Activated naive CD4-positive, alpha-beta T cell treated with anti-CD3 and anti-CD28 coated beads for 36 hours (primary cell): ENCODE measurements at regions of chr1 and their contacts with region 1.

Region 1: DNA sequence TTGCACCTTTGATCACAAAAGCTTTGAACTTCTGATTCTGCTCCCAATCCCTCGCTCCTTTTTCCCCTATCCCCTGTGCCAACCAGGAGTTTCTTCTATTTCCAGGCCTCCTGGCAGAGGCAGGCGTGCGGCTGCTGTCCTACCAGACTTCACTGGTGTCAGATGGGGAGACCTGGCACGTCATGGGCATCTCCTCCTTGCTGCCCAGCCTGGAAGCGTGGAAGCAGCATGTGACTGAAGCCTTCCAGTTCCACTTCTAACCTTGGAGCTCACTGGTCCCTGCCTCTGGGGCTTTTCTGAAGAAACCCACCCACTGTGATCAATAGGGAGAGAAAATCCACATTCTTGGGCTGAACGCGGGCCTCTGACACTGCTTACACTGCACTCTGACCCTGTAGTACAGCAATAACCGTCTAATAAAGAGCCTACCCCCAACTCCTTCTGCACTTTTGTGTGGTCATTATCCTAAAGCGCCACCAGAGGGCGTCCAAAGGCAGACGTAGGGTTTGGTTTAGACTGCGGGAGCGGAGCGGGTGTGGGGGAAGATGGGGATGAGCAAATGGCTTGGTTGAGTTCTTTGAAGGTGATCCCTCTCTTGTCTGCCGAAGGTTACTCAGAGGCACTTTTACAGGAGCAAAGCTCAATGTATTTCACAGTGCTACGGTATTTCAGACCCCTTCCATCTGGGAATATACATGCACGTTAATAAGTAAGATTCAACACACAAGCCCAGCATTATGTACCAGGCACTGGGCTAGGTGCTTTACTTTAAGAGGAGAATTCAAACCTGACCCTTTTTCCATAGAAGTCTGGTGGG is 24.7 kb downstream of the HMGCS2 start:
- DNase-seq: peak; percentile 72
- H3K4me3 Mint-ChIP-seq: no peak overlapping the region
- H3K27ac Mint-ChIP-seq: no peak overlapping the region
- H3K4me1 Mint-ChIP-seq: peaks cover 15% of the 10 kb centered on the region
- H3K27me3 Mint-ChIP-seq: no peaks in the 10 kb centered on the region

Region 2: DNA sequence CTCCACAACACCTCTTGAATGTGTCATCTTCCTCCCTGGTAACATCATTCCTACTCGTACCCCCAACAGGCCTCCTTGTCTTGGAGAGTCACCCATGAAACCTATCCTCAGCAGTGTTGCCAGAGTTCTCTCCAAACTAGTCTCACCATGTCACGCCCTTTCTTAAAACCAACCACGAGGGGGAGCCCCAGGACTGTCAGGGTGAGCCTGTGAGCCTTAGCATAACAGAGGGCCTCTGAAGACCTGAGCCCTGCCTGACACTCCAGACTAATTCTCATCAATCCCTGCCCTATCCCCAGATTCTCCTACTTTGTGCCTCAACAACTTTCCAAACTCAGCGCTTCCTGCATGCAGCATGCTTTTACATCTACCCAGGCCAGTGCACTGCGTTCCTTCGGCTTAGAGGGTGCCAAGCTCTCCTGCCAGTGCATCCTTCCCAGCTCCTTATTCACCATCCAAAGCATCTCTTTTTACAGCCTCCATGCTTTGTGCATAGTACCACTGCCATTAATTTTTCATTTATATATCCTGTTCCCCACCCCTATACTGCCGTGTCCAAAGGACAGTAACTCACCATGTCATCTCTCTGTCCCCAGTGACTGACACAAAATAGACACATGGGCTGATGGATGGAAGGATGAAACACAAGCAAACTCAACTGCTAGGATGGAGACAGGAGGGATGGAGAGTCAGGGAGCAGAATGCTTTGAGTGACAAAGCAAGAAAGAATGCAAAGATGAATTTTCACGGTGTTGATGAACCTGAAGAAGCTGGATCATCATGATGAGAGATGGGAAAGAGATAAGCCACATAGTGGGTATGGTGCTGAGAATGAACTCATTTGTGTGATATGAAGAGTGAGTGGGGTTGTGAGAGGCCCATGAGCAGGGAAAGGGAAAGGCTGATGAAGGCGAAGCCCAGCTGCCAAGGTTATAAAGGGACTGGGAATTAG is 129.9 kb before region 1 on chr1:
- CTCF ChIA-PET with region 1: interaction called, 4 read pairs
- intact Hi-C with region 1: loop called (anchors 5 kb)
- DNase-seq: peak; percentile 86
- H3K4me3 Mint-ChIP-seq: no peak overlapping the region
- H3K27ac Mint-ChIP-seq: no peak overlapping the region
- H3K4me1 Mint-ChIP-seq: no peaks in the 10 kb centered on the region
- H3K27me3 Mint-ChIP-seq: no peaks in the 10 kb centered on the region

Region 3: DNA sequence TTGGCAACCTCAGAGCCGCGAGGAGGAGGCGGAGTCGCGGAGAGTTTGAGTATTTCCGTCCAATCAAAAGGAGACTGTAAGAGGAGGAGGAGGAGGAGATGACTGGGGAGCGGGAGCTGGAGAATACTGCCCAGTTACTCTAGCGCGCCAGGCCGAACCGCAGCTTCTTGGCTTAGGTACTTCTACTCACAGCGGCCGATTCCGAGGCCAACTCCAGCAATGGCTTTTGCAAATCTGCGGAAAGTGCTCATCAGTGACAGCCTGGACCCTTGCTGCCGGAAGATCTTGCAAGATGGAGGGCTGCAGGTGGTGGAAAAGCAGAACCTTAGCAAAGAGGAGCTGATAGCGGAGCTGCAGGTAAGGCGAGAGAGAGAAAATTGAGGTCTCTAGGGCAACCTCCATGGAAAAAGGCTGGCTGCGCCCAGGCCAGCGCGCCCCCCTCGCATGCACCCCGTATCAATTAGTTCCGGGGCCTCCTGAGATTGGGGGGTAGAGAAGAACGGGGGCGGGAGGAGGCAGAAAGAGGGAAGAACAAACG is 32.1 kb before region 1 on chr1 and contains the start of gene PHGDH:
- CTCF ChIA-PET with region 1: interaction called, 8 read pairs
- intact Hi-C with region 1: loop called (anchors 2 kb)
- DNase-seq: peak; percentile 85
- H3K4me3 Mint-ChIP-seq: peak within 1 kb of the TSS; percentile 88
- H3K27ac Mint-ChIP-seq: peak within 1 kb of the TSS; percentile 84
- H3K4me1 Mint-ChIP-seq: peaks cover 31% of the 10 kb centered on the region
- H3K27me3 Mint-ChIP-seq: no peaks in the 10 kb centered on the region
- total RNA-seq, gene PHGDH: 422 to 439 TPM

Region 4: DNA sequence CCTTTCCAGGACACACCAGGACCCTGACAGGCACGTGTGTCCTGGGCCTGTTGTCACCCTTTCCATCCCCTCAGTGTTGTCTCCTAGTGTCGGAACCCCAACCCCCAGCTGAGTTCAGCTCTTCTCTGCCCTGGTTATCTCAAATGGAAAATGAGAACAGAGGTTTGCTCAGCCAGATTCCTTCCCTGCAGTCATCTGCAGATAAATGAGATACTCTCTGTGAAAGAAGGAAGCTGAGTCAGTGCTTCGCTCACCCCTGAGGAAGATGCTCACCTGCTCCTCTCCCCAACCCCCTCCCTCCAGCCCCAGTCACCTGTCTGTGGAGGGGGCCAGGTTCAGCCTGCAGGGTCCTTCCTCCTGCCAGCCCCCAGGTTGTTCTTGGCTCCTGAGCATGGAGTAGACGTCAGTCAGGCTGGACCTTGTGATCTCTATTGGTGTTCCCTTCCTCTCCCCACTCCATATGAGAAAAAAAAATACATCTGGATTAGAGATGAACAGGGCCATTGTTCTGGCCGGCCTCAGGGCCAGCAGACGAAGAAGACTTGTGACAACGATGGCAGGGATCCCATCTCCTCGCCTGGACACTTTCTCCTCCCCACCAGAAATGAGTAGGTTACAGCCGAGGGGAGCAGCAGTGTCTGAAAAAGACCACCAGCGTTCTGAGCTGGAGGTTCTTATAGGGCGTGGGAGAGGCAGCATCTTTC is 11.4 kb before region 1 on chr1:
- CTCF ChIA-PET with region 1: interaction called, 22 read pairs
- intact Hi-C with region 1: no loop called
- DNase-seq: no peak
- H3K4me3 Mint-ChIP-seq: no peak overlapping the region
- H3K27ac Mint-ChIP-seq: no peak overlapping the region
- H3K4me1 Mint-ChIP-seq: no peaks in the 10 kb centered on the region
- H3K27me3 Mint-ChIP-seq: no peaks in the 10 kb centered on the region

Region 5: DNA sequence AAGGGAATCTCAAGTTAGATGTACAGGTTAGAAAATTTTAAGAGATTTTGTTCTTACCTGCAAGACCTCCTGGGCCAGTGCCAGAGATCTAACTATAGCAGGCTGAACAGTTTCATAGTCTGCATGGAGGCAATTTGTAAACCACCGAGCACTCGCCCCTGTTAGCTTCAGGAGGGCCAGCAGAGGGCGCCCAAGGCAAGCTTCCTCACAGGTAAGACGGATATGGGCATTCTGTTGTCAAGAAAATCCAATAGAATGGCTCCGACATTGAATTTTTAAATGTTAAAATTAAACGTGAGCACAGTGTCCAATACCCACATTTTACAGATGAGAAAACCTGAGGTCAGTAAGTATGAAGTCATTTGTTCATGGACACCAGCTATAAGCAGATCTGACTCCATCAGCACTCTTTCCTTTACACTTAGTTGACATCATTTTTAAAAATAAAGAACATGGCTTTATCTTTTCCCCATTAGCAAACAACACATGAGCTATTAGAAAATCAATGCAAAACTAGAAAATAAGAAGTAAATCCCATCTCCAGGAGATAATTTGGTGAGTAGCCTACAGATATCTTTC is 65.1 kb after region 1 on chr1:
- CTCF ChIA-PET with region 1: interaction called, 15 read pairs
- intact Hi-C with region 1: loop called (anchors 1 kb)
- DNase-seq: peak; percentile 82
- H3K4me3 Mint-ChIP-seq: no peak overlapping the region
- H3K27ac Mint-ChIP-seq: no peak overlapping the region
- H3K4me1 Mint-ChIP-seq: peaks cover 3% of the 10 kb centered on the region
- H3K27me3 Mint-ChIP-seq: peaks cover 2% of the 10 kb centered on the region

Region 6: DNA sequence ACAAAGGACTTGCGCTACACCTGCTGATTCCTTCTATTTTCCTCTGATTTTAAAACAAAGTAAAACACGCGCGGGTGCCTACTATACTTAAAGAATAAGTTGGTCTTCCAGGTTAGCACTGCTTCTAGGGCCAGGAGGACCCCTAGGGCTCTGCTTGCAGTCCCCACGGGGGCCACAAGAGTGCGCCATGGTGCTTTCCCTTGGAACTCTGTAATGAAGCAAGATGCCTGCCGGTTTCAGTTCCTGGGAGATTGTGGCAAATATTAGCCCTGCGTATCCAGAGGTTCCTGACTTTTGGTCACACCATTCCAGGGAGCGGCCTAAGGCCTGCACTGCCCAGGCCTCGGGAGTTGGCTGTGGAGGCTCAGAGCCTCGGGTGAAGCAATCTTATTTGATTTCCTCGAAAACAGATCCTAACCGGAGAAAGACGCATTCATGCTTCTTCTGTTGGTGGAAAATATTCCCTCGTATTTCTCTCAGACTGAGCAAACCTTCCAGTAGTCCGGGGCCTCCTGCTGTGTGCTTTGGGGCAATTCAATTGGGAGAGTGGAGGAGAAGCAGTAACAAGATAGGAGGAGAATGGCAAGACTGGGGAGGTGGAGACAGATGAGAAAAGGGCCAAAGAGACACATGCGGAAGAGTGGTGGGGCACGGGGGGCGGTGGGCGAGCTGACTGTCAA is 127.1 kb after region 1 on chr1:
- CTCF ChIA-PET with region 1: interaction called, 3 read pairs
- intact Hi-C with region 1: loop called (anchors 5 kb)
- DNase-seq: peak; percentile 78
- H3K4me3 Mint-ChIP-seq: no peak overlapping the region
- H3K27ac Mint-ChIP-seq: no peak overlapping the region
- H3K4me1 Mint-ChIP-seq: no peaks in the 10 kb centered on the region
- H3K27me3 Mint-ChIP-seq: peaks cover 6% of the 10 kb centered on the region

Region 7: DNA sequence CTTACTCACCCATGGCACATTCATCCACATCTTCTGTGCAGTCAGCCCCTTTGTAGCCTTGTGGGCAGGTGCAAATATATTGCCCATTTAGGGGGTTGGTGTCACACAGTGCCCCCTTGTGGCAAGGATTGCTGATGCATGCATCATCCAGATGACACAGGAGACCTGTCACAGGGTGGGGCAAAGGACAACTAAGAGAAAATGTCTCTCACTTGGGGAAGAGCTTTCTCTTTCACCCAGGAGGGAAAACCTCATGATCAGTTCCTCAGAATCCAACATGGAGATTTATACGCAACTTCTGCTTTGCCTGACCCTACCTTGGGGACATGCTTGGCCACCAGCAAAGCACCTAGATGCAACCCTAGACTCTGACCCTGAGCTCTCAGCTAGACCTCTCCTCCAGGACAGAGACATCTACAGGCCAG is 224.1 kb after region 1 on chr1:
- CTCF ChIA-PET with region 1: no interaction called
- intact Hi-C with region 1: loop called (anchors 1 kb)
- DNase-seq: peak; percentile 92
- H3K4me3 Mint-ChIP-seq: no peak overlapping the region
- H3K27ac Mint-ChIP-seq: no peak overlapping the region
- H3K4me1 Mint-ChIP-seq: peaks cover 3% of the 10 kb centered on the region
- H3K27me3 Mint-ChIP-seq: no peaks in the 10 kb centered on the region